Left cardiac atrium (tissue), 4 donors: ENCODE measurements at regions of chr1 and their contacts with region 1.

Region 1: GRCh38 chr1:179293340-179294327 is at the start of gene SOAT1:
- DNase-seq: peak; percentile 96
- ATAC-seq: peak; percentile 99
- total RNA-seq, gene SOAT1: 20.6 to 21.8 TPM

Region 2: GRCh38 chr1:179121159-179121938 is 172.3 kb before region 1 on chr1:
- intact Hi-C with region 1: loop called in 1 of 2 experiments (anchors 10 kb)
- DNase-seq: no peak
- ATAC-seq: peak in 1 of 2 donors; percentile 21